Activated T-helper 1 cell treated with anti-CD3 and anti-CD28 coated beads, Interleukin-12 subunit alpha, Interleukin-12 subunit beta, Interleukin-2, Interleukin-4 antibody, amounts not matched to agents 30 ng/mL and 10 ng/mL and 1 ng/mL, durations not matched to agents 14 hours and 24 hours and 36 hours (primary cell): ENCODE measurements at regions of chr19 and their contacts with region 1.

Region 1: DNA sequence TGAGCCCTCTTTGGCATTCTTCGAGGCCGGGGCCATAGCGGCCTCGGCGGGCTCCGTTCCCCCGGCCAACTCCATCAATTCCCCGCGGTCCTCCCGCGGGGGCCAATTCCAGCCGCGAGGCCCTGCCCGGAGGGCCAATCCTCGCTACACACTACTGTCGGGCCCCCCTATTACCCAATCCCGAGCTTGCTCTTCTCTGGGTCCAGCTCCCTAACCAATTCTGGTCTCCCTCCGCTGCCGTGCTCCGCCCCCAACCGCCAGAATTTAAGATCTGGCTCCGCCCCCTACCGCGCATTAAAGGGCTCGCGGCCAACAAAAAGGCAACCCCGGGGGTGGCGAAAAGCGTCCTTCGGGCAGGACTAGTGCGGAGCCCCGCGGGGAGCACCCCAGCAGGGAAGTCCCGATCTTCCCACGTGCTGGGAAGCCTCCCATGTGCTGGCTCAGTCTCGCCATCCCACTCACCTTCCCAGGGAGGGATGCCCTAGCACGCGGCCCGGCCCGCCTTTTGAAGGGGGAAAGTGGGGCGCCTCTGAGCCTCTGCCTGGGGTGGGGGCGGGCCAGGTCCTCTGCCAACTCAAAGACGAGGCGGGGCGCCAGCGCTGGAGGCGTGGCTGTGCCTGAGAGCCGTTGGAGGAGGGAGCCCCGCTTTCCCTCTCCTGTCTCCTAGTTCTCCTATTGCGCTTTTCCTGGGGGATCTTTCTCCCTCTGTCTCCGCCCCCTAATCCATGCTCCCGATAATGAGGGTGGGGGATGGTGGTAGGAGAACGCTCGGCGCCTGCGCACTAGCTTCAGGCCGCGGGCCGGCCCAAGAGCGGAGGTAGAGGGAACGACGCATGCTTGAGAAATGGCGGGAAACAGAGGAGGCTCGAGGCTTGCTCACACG is 3.5 kb downstream of the LIPE start:
- DNase-seq: peak; percentile 93
- H3K4me3 Mint-ChIP-seq: peak overlapping the region; percentile 99
- H3K27ac Mint-ChIP-seq: peak overlapping the region; percentile 98
- H3K4me1 Mint-ChIP-seq: peaks cover 32% of the 10 kb centered on the region
- H3K27me3 Mint-ChIP-seq: peaks cover 9% of the 10 kb centered on the region

Region 2: DNA sequence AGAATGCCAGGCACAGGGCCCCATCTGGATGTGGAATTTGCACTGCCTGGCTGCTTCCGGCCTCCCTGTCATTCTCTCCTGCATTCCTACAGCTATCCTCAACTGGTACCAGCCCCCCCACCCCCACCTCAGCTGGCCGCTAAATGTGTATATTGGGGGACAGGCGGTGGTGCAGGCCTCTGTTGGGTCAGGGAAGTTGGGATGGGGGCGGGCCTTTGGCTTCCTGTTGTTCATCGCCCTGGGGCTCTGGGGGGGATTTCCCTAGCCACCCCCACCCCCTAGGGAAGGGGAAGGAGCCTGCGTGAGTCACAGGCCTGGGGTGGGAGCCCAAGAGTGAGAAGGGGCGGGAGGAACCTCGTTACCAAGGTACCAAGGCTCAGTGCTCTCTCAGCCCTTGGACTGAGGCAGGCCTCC is 302.0 kb before region 1 on chr19:
- intact Hi-C with region 1: loop called (anchors 5 kb)
- DNase-seq: peak; percentile 74
- H3K4me3 Mint-ChIP-seq: peak overlapping the region; percentile 78
- H3K27ac Mint-ChIP-seq: peak overlapping the region; percentile 97
- H3K4me1 Mint-ChIP-seq: peaks cover 42% of the 10 kb centered on the region
- H3K27me3 Mint-ChIP-seq: no peaks in the 10 kb centered on the region

Region 3: DNA sequence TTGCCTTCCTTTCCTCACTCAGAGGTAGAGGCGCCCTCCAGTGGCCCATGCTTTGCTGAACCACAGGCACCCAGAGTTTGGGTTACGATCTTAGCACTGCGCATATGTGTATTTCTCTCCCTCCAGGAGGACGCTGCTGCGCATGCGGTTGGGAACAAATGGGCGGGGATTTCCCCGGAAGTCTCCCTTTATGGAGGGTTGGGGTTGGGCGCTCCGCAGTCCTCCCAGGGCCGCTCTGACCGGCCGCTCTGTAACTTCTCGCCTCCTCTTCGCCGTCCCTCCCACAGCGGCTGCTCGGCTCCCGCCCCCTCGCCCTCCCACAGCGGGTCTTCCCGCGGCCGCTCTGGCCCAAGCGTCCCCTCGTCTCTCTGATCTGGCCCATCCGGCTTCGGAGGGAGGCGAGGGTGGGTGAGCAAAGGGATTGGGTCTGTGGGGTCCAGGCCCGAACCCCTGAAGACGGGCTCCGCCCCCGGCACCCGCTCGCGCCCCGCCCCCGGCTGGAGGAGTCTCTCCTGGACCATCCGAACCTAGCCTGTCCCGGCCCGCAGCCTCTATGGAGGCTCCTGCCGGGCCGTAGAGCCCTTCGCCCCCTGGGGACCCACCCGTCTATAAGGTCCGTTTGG is 98.3 kb before region 1 on chr19 and contains the start of gene MEGF8:
- intact Hi-C with region 1: loop called (anchors 1 kb)
- DNase-seq: peak; percentile 98
- H3K4me3 Mint-ChIP-seq: peak within 1 kb of the TSS; percentile 90
- H3K27ac Mint-ChIP-seq: peak within 1 kb of the TSS; percentile 53
- H3K4me1 Mint-ChIP-seq: peaks cover 15% of the 10 kb centered on the region
- H3K27me3 Mint-ChIP-seq: peaks cover 32% of the 10 kb centered on the region
- total RNA-seq, gene MEGF8: 7.5 and 7.8 TPM in 2 replicates

Region 4: GRCh38 chr19:42401365-42402303 is 22.1 kb before region 1 on chr19:
- intact Hi-C with region 1: loop called (anchors 1 kb)
- DNase-seq: peak; percentile 57
- H3K4me3 Mint-ChIP-seq: peak overlapping the region; percentile 76
- H3K27ac Mint-ChIP-seq: peak overlapping the region; percentile 61
- H3K4me1 Mint-ChIP-seq: peaks cover 31% of the 10 kb centered on the region
- H3K27me3 Mint-ChIP-seq: no peaks in the 10 kb centered on the region

Region 5: GRCh38 chr19:42450314-42450934 is 26.7 kb after region 1 on chr19:
- intact Hi-C with region 1: loop called (anchors 1 kb)
- DNase-seq: peak; percentile 74
- H3K4me3 Mint-ChIP-seq: no peak overlapping the region
- H3K27ac Mint-ChIP-seq: no peak overlapping the region
- H3K4me1 Mint-ChIP-seq: peaks cover 7% of the 10 kb centered on the region
- H3K27me3 Mint-ChIP-seq: peaks cover 2% of the 10 kb centered on the region

Region 6: GRCh38 chr19:42989851-42990250 is 566.1 kb after region 1 on chr19:
- intact Hi-C with region 1: no loop called
- DNase-seq: no peak
- H3K4me3 Mint-ChIP-seq: no peak overlapping the region
- H3K27ac Mint-ChIP-seq: no peak overlapping the region
- H3K4me1 Mint-ChIP-seq: no peaks in the 10 kb centered on the region
- H3K27me3 Mint-ChIP-seq: no peaks in the 10 kb centered on the region